ENCODE measurements at regions of chr14 and their contacts with region 1.

Region 1: GRCh38 chr14:64294672-64295413 is 672 bp upstream of the ESR2 start:
- DNase-seq: peak; percentile 94
- ATAC-seq: peak; percentile 81
- H3K4me3 Mint-ChIP-seq: peak overlapping the region; percentile 64
- H3K27ac Mint-ChIP-seq: no peak overlapping the region
- H3K4me1 Mint-ChIP-seq: peaks cover 20% of the 10 kb centered on the region
- H3K27me3 Mint-ChIP-seq: peaks cover 25% of the 10 kb centered on the region

Region 2: GRCh38 chr14:63342371-63342770 is 952.5 kb before region 1 on chr14:
- CTCF ChIA-PET with region 1: no interaction called
- POLR2A ChIA-PET with region 1: no interaction called
- intact Hi-C with region 1: no loop called
- DNase-seq: no peak
- ATAC-seq: no peak
- H3K4me3 Mint-ChIP-seq: no peak overlapping the region
- H3K27ac Mint-ChIP-seq: no peak overlapping the region
- H3K4me1 Mint-ChIP-seq: no peaks in the 10 kb centered on the region
- H3K27me3 Mint-ChIP-seq: peaks cover 26% of the 10 kb centered on the region

Region 3: DNA sequence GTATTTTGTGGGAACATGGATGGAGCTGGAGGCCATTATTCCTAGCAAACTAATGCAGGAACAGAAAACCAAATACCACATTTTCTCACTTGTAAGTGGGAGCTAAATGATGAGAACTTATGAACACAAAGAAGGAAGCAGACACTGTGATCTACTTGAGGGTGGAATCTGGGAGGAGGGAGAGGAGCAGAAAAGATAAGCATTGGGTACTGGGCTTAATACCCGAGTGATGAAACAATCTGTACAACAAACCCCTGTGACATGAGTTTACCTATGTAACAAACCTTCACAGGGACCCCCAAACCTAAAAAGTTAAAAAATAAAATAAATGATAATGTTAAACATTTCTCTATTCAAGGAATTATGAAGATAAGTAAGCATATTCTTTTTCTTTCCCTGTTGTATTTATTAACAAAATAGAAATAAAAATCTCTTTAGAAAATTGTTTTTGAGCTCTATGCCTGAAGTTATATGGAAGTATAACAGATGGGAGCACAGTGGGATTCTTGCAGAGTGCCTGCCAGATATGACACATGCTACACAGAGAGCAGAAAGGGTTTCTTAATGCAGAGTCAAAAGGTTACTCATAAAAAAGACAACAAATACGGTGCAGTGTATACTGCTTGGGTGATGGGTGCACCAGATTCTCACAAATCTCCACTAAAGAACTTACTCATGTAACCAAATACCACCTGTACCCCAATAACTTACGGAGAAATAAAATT is 494.0 kb before region 1 on chr14:
- CTCF ChIA-PET with region 1: interaction called, 3 read pairs
- POLR2A ChIA-PET with region 1: no interaction called
- intact Hi-C with region 1: loop called (anchors 1 to 2 kb)
- DNase-seq: no peak
- ATAC-seq: no peak
- H3K4me3 Mint-ChIP-seq: no peak overlapping the region
- H3K27ac Mint-ChIP-seq: no peak overlapping the region
- H3K4me1 Mint-ChIP-seq: peaks cover 6% of the 10 kb centered on the region
- H3K27me3 Mint-ChIP-seq: peaks cover 2% of the 10 kb centered on the region

Region 4: DNA sequence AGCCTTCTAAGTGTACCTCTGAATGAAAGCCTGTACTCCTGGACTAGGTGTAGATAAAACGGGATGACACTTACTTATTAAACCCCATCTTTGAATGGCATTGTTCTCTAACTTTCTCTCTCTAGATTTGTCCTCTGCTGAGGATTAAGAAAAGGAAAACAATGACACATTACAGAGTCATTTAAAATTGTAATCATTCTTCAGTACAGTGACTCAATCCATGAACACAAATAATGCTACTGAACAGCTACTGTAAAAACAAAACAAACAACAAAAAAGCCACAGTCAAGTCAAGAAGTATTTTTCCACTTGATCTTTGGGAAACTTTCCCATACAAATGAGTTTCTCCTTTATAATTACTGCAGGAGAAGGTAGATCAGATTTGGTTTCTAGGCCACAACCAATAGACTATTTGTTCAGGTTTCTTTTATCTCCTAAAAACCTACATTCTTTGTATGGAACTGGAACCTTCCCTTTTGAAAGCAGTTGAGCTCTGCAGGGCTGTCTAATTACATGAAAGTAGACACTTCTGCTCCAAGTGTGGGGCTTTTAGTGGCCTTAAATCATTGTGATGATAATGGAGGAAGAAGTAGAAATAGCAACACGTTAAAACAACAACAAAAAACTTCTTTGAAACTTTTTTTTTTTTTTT is 219.8 kb before region 1 on chr14:
- CTCF ChIA-PET with region 1: no interaction called
- POLR2A ChIA-PET with region 1: no interaction called
- intact Hi-C with region 1: no loop called
- DNase-seq: no peak
- ATAC-seq: peak; percentile 66
- H3K4me3 Mint-ChIP-seq: no peak overlapping the region
- H3K27ac Mint-ChIP-seq: no peak overlapping the region
- H3K4me1 Mint-ChIP-seq: no peaks in the 10 kb centered on the region
- H3K27me3 Mint-ChIP-seq: no peaks in the 10 kb centered on the region

Region 5: DNA sequence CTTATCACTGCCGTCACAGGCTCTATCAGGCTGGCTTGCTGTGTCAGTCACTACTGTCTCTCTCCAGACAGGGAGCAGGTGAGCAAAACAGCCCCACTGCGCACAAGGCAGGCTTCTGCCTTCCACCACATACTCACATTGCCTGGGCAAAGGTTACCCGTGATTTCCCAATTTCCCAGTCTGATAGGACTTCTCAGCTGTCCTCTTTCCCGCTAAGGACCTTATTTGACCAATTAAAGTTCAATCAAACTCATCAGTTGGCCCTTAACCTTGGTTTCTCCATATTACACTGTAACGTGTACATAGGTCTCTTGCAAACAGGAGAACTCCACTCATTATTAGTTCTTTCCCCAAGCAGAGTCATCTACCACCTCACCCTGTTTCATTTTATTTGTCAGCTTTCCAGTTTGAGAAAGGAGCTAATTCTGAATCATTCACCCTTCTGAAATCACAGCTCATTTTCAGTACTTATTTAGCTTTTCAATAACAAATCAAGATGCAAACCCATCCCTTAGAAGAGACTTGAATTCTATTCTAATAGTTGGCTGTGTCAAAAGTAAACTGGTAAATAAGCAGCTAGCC is 171.5 kb before region 1 on chr14:
- CTCF ChIA-PET with region 1: no interaction called
- POLR2A ChIA-PET with region 1: no interaction called
- intact Hi-C with region 1: loop called in 1 of 2 experiments (anchors 10 kb)
- DNase-seq: no peak
- ATAC-seq: peak; percentile 74
- H3K4me3 Mint-ChIP-seq: no peak overlapping the region
- H3K27ac Mint-ChIP-seq: no peak overlapping the region
- H3K4me1 Mint-ChIP-seq: peaks cover 12% of the 10 kb centered on the region
- H3K27me3 Mint-ChIP-seq: no peaks in the 10 kb centered on the region

Region 6: DNA sequence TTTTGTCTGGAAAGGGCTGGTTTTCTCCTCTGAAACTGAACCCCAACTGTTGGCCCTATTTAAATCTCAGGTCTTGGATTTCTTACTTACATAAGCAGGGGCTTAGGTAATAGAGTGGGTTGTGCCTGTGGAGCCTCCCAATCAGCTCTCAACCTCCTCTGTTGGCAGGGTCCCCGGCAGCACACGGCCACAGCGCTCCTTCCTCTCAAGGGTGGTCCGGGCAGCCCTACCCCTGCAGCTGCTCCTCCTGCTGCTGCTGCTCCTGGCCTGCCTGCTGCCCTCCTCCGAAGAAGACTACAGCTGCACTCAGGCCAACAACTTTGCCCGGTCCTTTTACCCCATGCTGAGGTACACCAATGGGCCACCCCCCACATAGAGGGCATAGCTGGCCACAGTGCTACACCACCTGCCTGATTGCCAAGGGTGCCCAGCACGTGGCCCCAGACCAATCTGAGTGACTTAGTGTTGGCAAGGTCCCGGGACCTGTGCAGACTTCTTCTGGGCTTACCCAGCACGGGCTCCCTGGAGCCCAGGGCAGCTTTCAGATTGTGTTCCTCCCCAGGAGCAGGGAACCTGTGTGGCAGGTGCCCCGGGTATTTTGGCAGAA is 69.6 kb before region 1 on chr14:
- CTCF ChIA-PET with region 1: interaction called, 10 read pairs
- POLR2A ChIA-PET with region 1: no interaction called
- intact Hi-C with region 1: no loop called
- DNase-seq: no peak
- ATAC-seq: no peak
- H3K4me3 Mint-ChIP-seq: no peak overlapping the region
- H3K27ac Mint-ChIP-seq: no peak overlapping the region
- H3K4me1 Mint-ChIP-seq: no peaks in the 10 kb centered on the region
- H3K27me3 Mint-ChIP-seq: no peaks in the 10 kb centered on the region

Region 7: DNA sequence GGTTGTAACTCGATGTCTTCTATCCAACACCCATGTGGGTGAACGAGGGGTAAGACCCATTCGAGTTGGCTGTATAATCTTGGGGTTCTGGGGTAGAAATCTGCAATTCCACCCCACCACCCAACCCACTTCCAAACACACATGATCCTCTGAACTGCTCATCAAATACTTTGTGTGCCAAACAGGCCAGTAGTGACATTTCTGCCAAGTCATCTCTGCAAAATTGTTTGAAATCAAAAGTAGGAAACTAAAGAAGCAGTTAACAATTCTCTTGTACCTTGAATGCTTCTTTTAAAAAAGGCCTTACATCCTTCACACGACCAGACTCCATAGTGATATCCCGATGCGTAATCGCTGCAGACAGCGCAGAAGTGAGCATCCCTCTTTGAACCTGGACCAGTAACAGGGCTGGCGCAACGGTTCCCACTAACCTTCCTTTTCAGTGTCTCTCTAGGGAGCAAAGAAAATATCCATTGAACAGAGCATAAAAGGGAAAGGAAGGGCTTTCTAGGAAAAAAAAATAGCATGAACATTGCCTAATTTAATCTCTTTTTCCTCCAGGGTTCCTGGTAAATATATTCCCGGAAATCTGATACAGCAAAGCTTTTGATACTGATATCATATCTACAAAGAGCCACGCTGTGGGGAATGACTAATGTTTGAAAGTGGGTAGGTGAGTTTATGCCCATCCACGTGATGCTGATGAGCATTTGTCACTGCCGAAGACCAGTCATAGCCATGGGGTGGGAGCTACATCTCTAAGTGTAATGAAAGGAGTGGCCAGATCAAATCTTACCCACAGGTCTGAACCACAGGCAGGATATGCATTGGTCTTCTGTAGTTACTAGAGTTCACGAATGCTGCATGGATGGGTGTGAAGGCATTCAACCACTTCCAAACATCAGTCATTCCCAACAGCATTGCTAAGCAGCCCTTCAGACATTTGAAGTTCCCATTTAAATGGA is 14.9 kb before region 1 on chr14:
- CTCF ChIA-PET with region 1: interaction called, 10 read pairs
- POLR2A ChIA-PET with region 1: no interaction called
- intact Hi-C with region 1: no loop called
- DNase-seq: peak; percentile 38
- ATAC-seq: peak; percentile 88
- H3K4me3 Mint-ChIP-seq: no peak overlapping the region
- H3K27ac Mint-ChIP-seq: no peak overlapping the region
- H3K4me1 Mint-ChIP-seq: peaks cover 22% of the 10 kb centered on the region
- H3K27me3 Mint-ChIP-seq: no peaks in the 10 kb centered on the region